ENCODE measurements at regions of chr22 and their contacts with region 1.

Region 1: DNA sequence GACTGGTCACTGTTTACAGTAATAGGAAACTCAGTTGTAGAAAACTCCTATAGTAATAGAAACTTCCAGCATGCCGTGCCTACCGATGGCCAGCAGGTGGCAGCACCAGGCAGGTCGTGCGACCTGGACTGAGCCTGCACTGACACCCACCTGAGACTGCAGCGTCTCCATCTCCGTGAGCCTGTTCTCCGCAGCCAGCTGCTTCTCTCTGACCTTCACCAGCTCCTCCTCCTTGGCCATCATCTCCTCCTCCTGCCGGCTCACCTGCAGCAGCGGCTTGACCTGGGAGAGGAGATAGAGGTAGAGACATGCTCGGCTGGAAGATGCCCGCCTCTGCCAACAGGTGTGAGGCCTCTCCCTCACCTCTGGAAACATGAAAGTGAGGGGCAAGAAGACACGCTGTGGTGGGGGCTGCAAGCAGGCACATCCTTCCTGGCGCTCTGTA is 48.5 kb downstream of the APOL1 start:
- DNase-seq: peak; percentile 65 to 84 (median 77)
- H3K4me3 ChIP-seq: no peak overlapping the region
- H3K27ac ChIP-seq: no peak overlapping the region
- H3K4me1 ChIP-seq: no peaks in the 10 kb centered on the region
- H3K27me3 ChIP-seq: no peaks in the 10 kb centered on the region

Region 2: DNA sequence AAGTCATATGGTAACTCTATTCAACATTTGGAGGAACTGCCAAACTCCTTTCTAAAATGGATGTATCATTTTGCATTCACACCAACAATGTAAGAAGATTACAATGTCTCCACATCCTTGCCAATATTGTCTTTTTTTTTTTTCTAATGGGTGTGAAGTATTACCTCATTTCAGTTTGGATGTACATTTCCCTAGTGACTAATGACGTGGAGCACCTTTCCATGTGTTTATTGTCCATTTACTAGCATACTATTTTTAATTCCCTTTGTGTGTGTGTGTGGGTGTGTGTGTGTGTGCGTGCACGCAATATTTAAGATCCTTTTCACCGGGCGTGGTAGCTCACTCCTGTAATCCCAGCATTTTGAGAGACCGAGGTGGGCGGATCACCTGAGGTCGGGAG is 203.5 kb before region 1 on chr22:
- CTCF ChIA-PET with region 1: no interaction called
- POLR2A ChIA-PET with region 1: no interaction called
- DNase-seq: no peak
- H3K4me3 ChIP-seq: no peak overlapping the region
- H3K27ac ChIP-seq: no peak overlapping the region
- H3K4me1 ChIP-seq: no peaks in the 10 kb centered on the region
- H3K27me3 ChIP-seq: no peaks in the 10 kb centered on the region

Region 3: GRCh38 chr22:36286471-36287224 is 14.8 kb before region 1 on chr22:
- CTCF ChIA-PET with region 1: interaction called, 107 read pairs
- POLR2A ChIA-PET with region 1: no interaction called
- DNase-seq: peak; percentile 50 to 79 (median 69)
- H3K4me3 ChIP-seq: no peak overlapping the region
- H3K27ac ChIP-seq: no peak overlapping the region
- H3K4me1 ChIP-seq: peaks cover 0 to 3% (median under 1%) of the 10 kb centered on the region in 4 experiments
- H3K27me3 ChIP-seq: no peaks in the 10 kb centered on the region

Region 4: DNA sequence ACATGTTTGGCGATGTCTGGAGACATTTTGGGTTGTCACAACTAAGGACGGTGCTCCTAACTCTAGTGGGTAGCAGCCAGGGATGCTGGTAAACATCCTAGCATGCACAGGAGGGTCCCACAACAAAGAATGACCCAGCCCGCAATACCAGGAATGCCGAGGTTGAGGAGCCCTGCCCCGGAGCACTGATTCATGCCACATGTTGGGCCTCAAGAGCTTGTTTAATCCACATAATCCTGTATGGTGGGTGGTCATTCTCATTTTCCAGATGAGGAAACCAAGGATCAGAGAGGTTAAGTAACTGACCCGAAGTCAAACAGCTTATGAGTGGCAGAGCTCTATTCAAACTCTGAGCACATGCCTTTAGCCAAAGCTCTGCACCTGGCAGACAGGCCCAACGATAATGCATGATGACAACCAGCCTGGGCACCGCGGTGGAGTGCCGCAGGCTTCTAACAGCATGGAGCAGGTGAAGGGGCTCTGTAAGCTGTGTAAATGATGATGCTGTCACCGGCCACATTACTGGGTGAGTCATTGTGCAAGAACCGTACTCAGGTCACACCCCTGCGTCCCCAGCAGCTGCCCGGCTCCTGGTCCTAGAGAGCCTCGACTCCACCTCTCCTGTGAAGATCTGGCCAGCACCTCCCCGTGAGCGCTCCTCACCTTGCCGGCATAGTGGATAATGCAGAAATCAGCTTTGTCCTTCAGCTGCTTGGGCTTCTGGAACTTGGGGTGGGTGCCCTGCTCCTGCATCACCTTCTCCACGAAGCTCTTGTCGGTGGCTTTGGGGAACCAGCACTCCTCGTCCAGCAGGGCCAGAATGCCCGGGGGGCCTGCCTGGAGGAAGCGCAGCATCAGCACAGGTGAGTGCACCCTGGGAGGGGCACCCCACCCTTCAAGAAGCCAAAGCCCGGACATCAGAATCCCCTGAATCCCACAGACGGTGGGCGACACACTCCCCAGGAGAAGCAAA is 10.3 kb after region 1 on chr22:
- CTCF ChIA-PET with region 1: interaction called, 25 read pairs
- POLR2A ChIA-PET with region 1: interaction called, 3 read pairs
- DNase-seq: no peak
- H3K4me3 ChIP-seq: no peak overlapping the region
- H3K27ac ChIP-seq: no peak overlapping the region
- H3K4me1 ChIP-seq: no peaks in the 10 kb centered on the region
- H3K27me3 ChIP-seq: no peaks in the 10 kb centered on the region

Region 5: GRCh38 chr22:36329254-36330078 is 28.1 kb after region 1 on chr22:
- CTCF ChIA-PET with region 1: interaction called, 42 read pairs
- POLR2A ChIA-PET with region 1: interaction called, 3 read pairs
- DNase-seq: peak; percentile 87 to 98 (median 97)
- H3K4me3 ChIP-seq: peak overlapping the region in 4 of 7 experiments; percentile 7 to 54 (median 42)
- H3K27ac ChIP-seq: peak overlapping the region; percentile 81 to 89
- H3K4me1 ChIP-seq: peaks cover 27 to 73% (median 71%) of the 10 kb centered on the region in 4 experiments
- H3K27me3 ChIP-seq: no peaks in the 10 kb centered on the region

Region 6: DNA sequence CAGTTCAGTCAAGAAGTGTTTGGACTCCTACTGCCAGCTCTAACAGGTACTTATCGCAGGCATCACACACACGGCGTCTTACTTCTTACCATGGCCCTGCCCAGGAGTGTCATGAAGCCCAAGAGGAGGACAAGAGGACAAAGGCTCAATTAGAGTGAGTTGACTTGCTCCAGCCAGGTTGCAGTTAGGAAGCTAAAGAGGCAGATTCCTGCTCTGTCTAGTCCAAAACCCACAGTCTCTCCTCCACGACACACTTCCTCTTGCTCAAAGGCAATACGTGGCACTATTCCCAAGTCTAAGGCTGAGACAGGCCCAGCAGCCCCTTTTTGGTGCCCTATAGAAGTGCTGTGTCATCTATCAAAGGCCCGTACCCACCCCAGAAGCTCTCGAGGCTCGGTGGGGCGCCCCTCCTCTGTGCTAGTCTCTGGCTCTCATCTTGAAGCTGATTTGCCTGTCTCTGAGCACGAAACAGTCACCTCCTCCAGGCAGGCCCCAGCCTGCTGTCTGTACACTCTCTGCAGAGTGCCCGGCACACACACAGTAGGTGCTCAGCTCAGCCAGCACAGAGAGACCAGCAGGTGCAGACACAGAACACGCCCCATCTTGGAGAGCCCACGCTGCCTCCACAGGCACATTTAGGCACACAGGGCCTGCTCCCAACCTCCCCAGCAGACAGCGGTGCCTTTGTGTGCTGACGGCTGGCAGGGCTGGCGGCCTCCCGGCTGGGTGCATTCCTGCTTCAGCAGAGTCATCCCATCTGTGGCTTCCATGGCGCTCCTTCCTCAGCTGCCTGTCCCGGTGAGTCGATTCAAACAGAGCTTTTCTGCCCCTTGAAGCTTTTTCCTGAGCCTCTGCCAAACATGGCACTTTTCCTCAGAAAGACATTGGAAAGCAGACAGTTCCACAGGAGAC is 33.6 kb after region 1 on chr22:
- CTCF ChIA-PET with region 1: interaction called, 11 read pairs
- POLR2A ChIA-PET with region 1: interaction called, 3 read pairs
- DNase-seq: peak in 2 of 3 donors; percentile 77 to 84
- H3K4me3 ChIP-seq: peak overlapping the region in 2 of 7 experiments; percentile 17 to 22
- H3K27ac ChIP-seq: peak overlapping the region in 1 of 2 experiments; percentile 89
- H3K4me1 ChIP-seq: peaks cover 30 to 84% (median 80%) of the 10 kb centered on the region in 4 experiments
- H3K27me3 ChIP-seq: no peaks in the 10 kb centered on the region

Region 7: GRCh38 chr22:36470162-36470993 is 169.0 kb after region 1 on chr22:
- CTCF ChIA-PET with region 1: interaction called, 112 read pairs
- POLR2A ChIA-PET with region 1: interaction called, 4 read pairs
- DNase-seq: peak; percentile 85 to 92 (median 90)
- H3K4me3 ChIP-seq: peak overlapping the region in 1 of 7 experiments; percentile 20
- H3K27ac ChIP-seq: peak overlapping the region in 1 of 2 experiments; percentile 38
- H3K4me1 ChIP-seq: peaks cover 3 to 62% (median 49%) of the 10 kb centered on the region in 4 experiments
- H3K27me3 ChIP-seq: no peaks in the 10 kb centered on the region

Region 8: GRCh38 chr22:36486619-36487384 is 185.4 kb after region 1 on chr22:
- CTCF ChIA-PET with region 1: interaction called, 52 read pairs
- POLR2A ChIA-PET with region 1: no interaction called
- DNase-seq: peak; percentile 54 to 76 (median 67)
- H3K4me3 ChIP-seq: no peak overlapping the region
- H3K27ac ChIP-seq: no peak overlapping the region
- H3K4me1 ChIP-seq: peaks cover 0 to 8% (median 6%) of the 10 kb centered on the region in 4 experiments
- H3K27me3 ChIP-seq: no peaks in the 10 kb centered on the region

Measured in common myeloid progenitor, CD34-positive (primary cell).